Transverse colon (tissue), 4 donors: ENCODE measurements at regions of chr3 and their contacts with region 1.

Region 1: DNA sequence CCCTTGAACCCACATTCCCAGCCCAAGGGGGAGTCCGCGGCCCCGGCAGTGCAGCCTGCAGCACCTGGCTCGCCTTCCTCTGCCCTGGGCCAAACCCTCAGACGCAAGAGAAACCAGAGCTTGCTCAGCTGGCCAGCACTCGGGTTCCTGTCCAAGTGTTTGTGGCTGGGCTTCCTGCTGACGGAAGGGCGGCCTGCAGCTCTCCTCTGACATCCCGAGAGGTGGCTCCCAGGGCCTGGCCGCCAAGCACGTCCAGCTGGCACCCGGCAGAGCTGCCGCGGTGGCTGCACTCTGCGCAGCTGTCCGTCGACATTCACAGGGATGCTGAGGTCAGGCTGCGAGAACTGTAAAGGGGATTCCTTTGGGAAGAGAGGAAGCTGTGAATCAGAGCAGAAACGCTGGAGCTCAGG is 85.6 kb downstream of the CPN2 start:
- DNase-seq: peak; percentile 60
- H3K4me3 ChIP-seq: no peak overlapping the region
- H3K27ac ChIP-seq: peak overlapping the region; percentile 62 to 79 (median 70)
- H3K4me1 ChIP-seq: peaks cover 13 to 25% (median 21%) of the 10 kb centered on the region in 4 donors
- H3K27me3 ChIP-seq: no peaks in the 10 kb centered on the region
- CTCF ChIP-seq: no peak
- EP300 ChIP-seq: no peak
- POLR2A ChIP-seq: no peak

Region 2: DNA sequence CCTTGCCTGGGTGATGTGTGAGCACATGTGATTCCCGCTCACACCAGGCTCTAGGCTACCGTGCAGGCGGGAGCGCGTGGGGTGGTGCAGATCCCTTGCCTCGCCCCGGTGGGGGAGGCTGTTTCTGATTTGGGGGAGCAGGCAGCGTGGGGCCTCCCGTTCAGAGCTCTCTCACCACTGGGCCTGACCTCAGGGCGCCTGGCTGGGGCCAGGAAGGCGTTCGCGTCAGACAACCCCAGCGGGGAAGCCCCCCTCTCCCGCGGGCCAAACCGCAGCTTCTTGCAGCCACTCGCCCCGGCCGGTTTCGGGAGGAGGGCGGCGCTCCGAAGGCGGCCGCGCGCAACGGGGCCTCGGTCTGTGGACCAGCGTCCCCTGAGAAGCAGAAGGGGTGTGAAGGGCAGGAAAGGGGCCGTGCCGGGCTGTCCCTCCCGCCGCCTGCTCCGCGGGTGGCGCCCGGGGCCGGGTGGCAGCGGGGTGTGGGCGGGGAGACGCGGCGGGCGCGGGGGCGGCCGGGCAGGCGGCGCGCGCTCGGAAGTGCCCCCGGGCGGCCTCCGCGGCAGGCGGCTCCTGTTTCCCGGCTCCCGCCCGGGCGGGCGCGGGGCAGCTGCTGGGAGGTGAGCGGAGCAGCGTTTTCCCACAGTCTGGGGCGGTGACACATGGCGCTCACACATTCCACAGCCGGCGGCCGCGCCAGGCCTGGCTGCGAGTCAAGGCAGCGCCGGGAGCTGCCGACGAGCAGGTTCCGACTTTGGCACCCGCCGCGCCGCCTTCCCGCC is 194.7 kb before region 1 on chr3:
- in situ Hi-C with region 1: no loop called
- intact Hi-C with region 1: loop called (anchors 5 kb)
- DNase-seq: peak; percentile 78
- H3K4me3 ChIP-seq: peak overlapping the region; percentile 32 to 50 (median 38)
- H3K27ac ChIP-seq: peak overlapping the region; percentile 69 to 78 (median 75)
- H3K4me1 ChIP-seq: peaks cover 12 to 31% (median 22%) of the 10 kb centered on the region in 4 donors
- H3K27me3 ChIP-seq: no peaks in the 10 kb centered on the region
- CTCF ChIP-seq: no peak
- EP300 ChIP-seq: no peak
- POLR2A ChIP-seq: peak; percentile 19